Gastrocnemius medialis (tissue), 4 donors: ENCODE measurements at regions of chr1 and their contacts with region 1.

Region 1: DNA sequence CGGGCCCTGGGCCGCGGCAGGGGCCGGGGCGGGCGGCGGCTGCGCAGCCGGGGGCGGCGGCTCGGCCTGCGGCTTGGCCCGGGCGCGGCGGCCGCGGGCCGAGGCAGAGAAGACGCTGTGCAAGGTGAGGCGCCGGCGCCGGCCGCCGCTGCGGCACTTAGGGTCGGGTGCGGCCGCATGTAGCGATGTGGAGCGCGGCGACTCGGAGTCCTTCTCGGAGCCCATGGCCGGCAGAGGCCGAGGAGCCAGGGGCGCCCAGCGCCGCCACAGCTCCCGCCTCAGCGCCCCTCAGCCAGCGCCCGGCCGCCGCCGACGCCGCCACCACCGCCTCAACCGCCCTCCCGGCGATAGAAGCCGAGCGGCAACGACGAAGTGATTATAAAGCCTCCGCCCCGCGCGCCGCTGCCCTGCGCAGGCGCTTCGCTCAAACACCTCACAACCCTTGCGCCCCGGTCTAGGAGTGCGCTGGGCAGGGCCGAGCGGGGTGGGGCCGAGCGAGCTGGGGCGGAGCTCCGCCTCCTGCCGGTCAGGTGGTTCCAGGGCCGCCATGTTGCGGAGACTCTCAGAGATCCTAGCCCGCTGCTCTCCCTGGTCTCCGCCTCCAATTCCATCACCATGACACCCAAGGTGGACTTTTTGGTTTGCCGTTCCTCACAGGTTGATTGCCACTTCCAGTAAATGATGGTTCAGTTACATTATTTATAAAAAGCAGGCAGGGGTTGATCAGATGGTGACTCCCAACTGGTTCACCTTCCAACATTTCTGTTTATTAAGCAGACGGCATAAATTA is at the start of gene RNF19B:
- DNase-seq: peak; percentile 92 to 93
- ATAC-seq: peak; percentile 89 to 90
- H3K4me3 ChIP-seq: peak within 1 kb of the TSS; percentile 66 to 85 (median 72)
- H3K27ac ChIP-seq: peak within 1 kb of the TSS; percentile 70 to 92 (median 90)
- H3K4me1 ChIP-seq: peaks cover 22 to 29% of the 10 kb centered on the region in 2 donors
- H3K27me3 ChIP-seq: peaks cover 0 to 6% (median 0%) of the 10 kb centered on the region in 3 donors
- CTCF ChIP-seq: peak in 3 of 5 experiments; percentile 16 to 57 (median 20)
- POLR2A ChIP-seq: peak; percentile 99
- total RNA-seq, gene RNF19B: 22.7 to 34.4 (median 28.6) TPM

Region 2: GRCh38 chr1:33007190-33008050 is 42.8 kb after region 1 on chr1:
- in situ Hi-C with region 1: no loop called
- intact Hi-C with region 1: loop called (anchors 5 kb)
- DNase-seq: peak; percentile 42 to 68
- ATAC-seq: peak; percentile 86 to 90
- H3K4me3 ChIP-seq: no peak overlapping the region
- H3K27ac ChIP-seq: peak overlapping the region in 2 of 4 donors; percentile 44 to 51
- H3K4me1 ChIP-seq: peaks cover 38 to 58% of the 10 kb centered on the region in 2 donors
- H3K27me3 ChIP-seq: no peaks in the 10 kb centered on the region
- CTCF ChIP-seq: peak in 4 of 5 experiments; percentile 35 to 52 (median 46)
- POLR2A ChIP-seq: peak in 1 of 2 donors; percentile 19

Region 3: GRCh38 chr1:33036526-33037503 is 72.2 kb after region 1 on chr1 and contains the start of gene AK2:
- in situ Hi-C with region 1: no loop called
- intact Hi-C with region 1: loop called (anchors 5 kb)
- DNase-seq: peak; percentile 98
- ATAC-seq: peak; percentile 93
- H3K4me3 ChIP-seq: peak within 1 kb of the TSS; percentile 78 to 99 (median 94)
- H3K27ac ChIP-seq: peak within 1 kb of the TSS; percentile 95 to 99 (median 98)
- H3K4me1 ChIP-seq: peaks cover 42 to 46% of the 10 kb centered on the region in 2 donors
- H3K27me3 ChIP-seq: no peaks in the 10 kb centered on the region
- CTCF ChIP-seq: no peak
- POLR2A ChIP-seq: peak; percentile 92 to 96
- total RNA-seq, gene AK2: 125 to 261 (median 152) TPM